ENCODE measurements at regions of chr17 and their contacts with region 1.

Region 1: GRCh38 chr17:17356149-17356930 is 53.2 kb downstream of the NT5M start:
- DNase-seq: peak; percentile 70
- ATAC-seq: peak; percentile 86
- H3K4me3 ChIP-seq: no peak overlapping the region
- H3K27ac ChIP-seq: no peak overlapping the region
- H3K4me1 ChIP-seq: peaks cover 0 to 10% of the 10 kb centered on the region in 2 experiments; a peak in 1 of 4 replicates
- H3K27me3 ChIP-seq: no peaks in the 10 kb centered on the region
- CTCF ChIP-seq: peak; percentile 96 to 100 (median 99)
- POLR2A ChIP-seq: no peak
- RAD21 ChIP-seq: peak; percentile 99

Region 2: GRCh38 chr17:17462048-17462824 is 105.9 kb after region 1 on chr17:
- CTCF ChIA-PET with region 1: no interaction called
- POLR2A ChIA-PET with region 1: no interaction called
- RAD21 ChIA-PET with region 1: no interaction called
- intact Hi-C with region 1: no loop called
- DNase-seq: no peak
- ATAC-seq: no peak
- H3K4me3 ChIP-seq: no peak overlapping the region
- H3K27ac ChIP-seq: no peak overlapping the region
- H3K4me1 ChIP-seq: no peaks in the 10 kb centered on the region
- H3K27me3 ChIP-seq: peaks cover 12% of the 10 kb centered on the region
- CTCF ChIP-seq: no peak
- POLR2A ChIP-seq: no peak
- RAD21 ChIP-seq: no peak

Region 3: DNA sequence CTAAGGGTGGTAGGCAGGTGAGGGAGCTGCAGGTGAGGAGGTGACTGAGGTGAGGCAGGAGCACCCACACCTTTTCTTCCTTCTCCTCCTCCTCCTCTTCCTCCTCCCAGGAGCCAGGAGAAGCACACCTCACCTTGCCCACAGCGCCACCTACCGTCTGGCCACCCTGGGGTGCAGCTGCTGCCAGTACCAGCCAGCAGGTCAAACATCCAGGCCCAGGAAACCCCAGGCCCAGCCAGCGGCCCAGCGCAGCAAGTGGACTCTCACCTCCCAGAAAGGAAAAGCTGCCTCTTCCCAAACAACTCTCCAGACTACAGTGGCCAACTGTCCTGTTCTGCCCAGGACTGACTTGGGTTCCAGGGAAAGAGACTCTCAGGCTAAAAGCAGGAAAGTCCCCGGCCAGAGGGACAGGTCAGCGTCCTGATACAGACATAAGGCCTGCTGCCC is 212.4 kb after region 1 on chr17:
- CTCF ChIA-PET with region 1: interaction called, 7 read pairs
- POLR2A ChIA-PET with region 1: no interaction called
- RAD21 ChIA-PET with region 1: no interaction called
- intact Hi-C with region 1: loop called (anchors 1 kb)
- DNase-seq: peak; percentile 10
- ATAC-seq: peak; percentile 89
- H3K4me3 ChIP-seq: no peak overlapping the region
- H3K27ac ChIP-seq: no peak overlapping the region
- H3K4me1 ChIP-seq: no peaks in the 10 kb centered on the region
- H3K27me3 ChIP-seq: no peaks in the 10 kb centered on the region
- CTCF ChIP-seq: peak; percentile 74 to 94 (median 86); a peak in 5 of 6 replicates
- POLR2A ChIP-seq: no peak
- RAD21 ChIP-seq: peak; percentile 79

Region 4: GRCh38 chr17:17641621-17642409 is 285.5 kb after region 1 on chr17:
- CTCF ChIA-PET with region 1: interaction called, 32 read pairs
- POLR2A ChIA-PET with region 1: no interaction called
- RAD21 ChIA-PET with region 1: interaction called, 3 to 6 read pairs
- intact Hi-C with region 1: loop called (anchors 1 kb)
- DNase-seq: peak; percentile 73
- ATAC-seq: peak; percentile 98
- H3K4me3 ChIP-seq: no peak overlapping the region
- H3K27ac ChIP-seq: no peak overlapping the region
- H3K4me1 ChIP-seq: peaks cover 0 to 5% of the 10 kb centered on the region in 2 experiments; a peak in 1 of 4 replicates
- H3K27me3 ChIP-seq: no peaks in the 10 kb centered on the region
- CTCF ChIP-seq: peak; percentile 83 to 93 (median 92)
- POLR2A ChIP-seq: no peak
- RAD21 ChIP-seq: peak; percentile 99

Region 5: DNA sequence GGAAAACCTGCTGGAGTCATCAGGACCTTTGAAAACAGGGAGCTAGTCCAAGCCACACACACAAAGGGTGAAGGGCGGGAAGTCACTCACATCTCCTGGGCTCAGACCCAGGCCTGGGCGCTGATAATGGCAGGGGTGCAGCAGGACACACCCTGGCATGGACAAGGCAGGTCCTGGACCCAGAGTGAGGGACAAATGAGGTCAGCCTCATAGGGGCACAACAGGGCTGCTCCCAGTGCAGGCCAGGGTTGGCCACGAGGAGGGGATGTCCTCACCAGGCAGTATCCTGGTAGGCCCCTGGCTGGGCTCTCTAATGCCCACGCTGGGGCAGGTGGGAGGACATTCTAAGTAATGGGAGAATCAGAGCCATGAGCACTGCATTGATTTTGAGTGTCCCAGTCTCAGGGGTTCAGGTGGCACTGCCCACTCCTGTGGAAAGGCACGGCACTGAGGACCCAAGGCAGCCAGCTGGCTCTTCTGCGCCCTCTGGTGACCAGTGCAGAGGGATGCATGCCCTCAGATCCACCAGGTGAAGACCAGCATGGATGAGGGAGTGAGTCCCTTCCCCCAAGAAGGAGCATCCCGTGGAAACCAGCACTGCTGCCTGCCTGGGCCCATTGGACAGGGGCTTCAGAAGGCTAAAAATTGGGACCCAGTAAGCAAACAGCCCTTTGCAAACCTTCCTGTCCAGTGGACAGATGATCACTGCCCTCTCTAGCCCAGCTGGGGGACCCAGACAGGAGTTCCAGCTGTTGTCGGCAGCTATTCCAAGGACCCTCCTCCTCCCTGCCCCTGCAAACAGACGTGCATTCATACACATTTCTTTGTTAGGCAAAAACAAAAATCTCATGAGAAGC is 503.8 kb after region 1 on chr17:
- CTCF ChIA-PET with region 1: no interaction called
- POLR2A ChIA-PET with region 1: no interaction called
- RAD21 ChIA-PET with region 1: no interaction called
- intact Hi-C with region 1: loop called (anchors 10 kb)
- DNase-seq: no peak
- ATAC-seq: peak; percentile 98
- H3K4me3 ChIP-seq: no peak overlapping the region
- H3K27ac ChIP-seq: no peak overlapping the region
- H3K4me1 ChIP-seq: peaks cover 24 to 36% of the 10 kb centered on the region in 2 experiments; a peak in 3 of 4 replicates
- H3K27me3 ChIP-seq: no peaks in the 10 kb centered on the region
- CTCF ChIP-seq: peak; percentile 92 to 97 (median 93)
- POLR2A ChIP-seq: no peak
- RAD21 ChIP-seq: peak; percentile 99

Region 6: DNA sequence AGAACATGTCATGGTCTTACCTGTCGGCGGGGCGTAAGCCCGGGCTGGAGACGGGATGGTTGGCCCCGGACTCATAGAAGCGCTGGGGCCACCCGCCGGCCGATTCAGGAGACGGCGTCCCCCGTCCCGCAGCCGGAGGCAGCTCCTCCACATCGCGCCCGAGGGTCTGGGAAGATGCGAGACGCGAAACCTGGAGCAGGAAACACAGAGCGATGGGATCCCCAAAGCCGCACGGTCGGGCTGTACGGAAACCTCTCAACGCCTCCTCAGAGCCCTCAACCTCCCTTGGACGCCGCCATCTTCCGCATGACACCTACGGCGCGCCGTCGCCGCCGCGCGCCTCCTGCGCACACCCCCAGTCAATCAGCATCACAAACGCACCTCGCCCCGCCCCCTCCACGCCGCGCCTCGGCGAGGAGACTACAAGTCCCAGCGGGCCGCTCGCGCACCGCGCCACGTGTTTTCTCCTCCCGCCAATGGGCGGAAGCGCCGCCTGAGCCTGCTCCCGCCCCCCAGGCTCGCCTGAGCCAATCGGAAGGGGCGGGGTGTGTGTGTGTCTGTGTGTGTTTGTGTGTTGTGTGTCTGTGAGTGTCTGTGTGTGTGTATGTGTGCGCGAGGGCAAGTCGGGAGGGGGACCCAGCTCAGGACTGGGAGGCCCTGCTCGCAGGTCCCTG is 682.7 kb after region 1 on chr17 and contains the starts of genes ATPAF2 and GID4:
- CTCF ChIA-PET with region 1: no interaction called
- POLR2A ChIA-PET with region 1: no interaction called
- RAD21 ChIA-PET with region 1: no interaction called
- intact Hi-C with region 1: loop called (anchors 10 kb)
- DNase-seq: peak; percentile 97
- ATAC-seq: peak; percentile 92
- H3K4me3 ChIP-seq: peak within 1 kb of the TSS; percentile 84 to 85
- H3K27ac ChIP-seq: peak within 1 kb of the TSS; percentile 80
- H3K4me1 ChIP-seq: peaks cover 6 to 21% of the 10 kb centered on the region in 2 experiments; a peak in 3 of 4 replicates
- H3K27me3 ChIP-seq: no peaks in the 10 kb centered on the region
- CTCF ChIP-seq: peak in 1 of 3 experiments; percentile 12; a peak in 1 of 6 replicates
- POLR2A ChIP-seq: peak; percentile 59
- RAD21 ChIP-seq: no peak
- total RNA-seq, gene ATPAF2: 46.1 TPM
- total RNA-seq, gene GID4: 10.8 TPM

Measured in HCT116 (cell line).